ENCODE measurements at regions of chr2 and their contacts with region 1.

Region 1: DNA sequence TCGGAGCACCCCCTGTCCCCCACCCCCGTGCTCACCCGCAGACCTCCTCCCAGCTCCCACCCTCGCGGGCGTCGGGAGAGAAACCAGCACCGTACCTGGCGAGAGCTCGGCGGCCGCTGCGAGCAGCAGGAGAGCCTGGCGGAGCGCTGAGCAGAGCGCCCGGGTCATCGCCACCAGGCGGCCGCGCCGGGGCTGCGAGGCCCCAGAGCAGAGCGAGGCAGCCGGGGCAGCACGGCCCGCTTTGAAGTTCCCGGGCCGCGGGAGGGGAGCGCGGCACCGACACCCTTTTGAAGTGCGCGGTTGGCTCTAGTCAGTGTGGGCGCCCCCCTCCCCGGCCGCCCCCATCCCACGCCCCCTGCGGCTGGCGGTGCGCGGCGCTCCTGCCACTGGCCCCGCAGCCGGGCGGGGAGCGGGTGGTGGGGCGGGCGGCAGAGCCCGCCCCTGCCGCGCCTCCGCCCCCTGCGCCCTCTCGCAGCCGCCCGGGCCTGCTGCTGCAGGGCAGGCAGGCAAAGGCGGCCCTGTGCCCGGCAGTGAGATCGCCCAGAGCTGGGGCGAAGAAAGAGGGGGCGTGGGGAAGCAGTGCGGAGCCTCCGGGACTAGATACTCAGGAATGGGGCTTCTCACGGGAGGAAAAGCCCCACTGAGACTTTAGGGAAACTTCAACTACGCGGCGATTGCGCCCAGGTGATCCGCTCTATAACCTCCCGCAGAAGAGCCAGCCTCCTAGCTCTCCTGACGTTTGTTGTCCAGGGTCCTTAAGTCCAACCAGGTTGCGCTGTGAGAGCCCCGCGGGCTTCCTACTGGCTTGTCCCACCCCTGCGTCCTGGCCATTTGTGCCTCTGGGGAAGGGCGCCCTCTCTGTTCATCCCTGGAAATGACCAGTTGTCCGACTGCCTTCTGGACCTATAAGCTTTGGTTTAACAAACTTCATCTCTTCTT is at the start of gene ACVR1C:
- DNase-seq: peak; percentile 70
- ATAC-seq: peak; percentile 85
- H3K4me3 ChIP-seq: peak within 1 kb of the TSS; percentile 34 to 68 (median 57)
- H3K4me3 Mint-ChIP-seq: peak within 1 kb of the TSS; percentile 85
- H3K27ac ChIP-seq: no peak within 1 kb of the TSS
- H3K27ac Mint-ChIP-seq: peak within 1 kb of the TSS; percentile 63
- H3K4me1 ChIP-seq: peaks cover 12 to 17% of the 10 kb centered on the region in 2 donors
- H3K4me1 Mint-ChIP-seq: peaks cover 23% of the 10 kb centered on the region
- H3K27me3 ChIP-seq: peaks cover 0 to 13% (median 2%) of the 10 kb centered on the region in 4 experiments
- H3K27me3 Mint-ChIP-seq: peaks cover 19% of the 10 kb centered on the region
- CTCF ChIP-seq: peak; percentile 44
- total RNA-seq, gene ACVR1C: 0.39 and 0.52 TPM in 2 replicates

Region 2: GRCh38 chr2:157523270-157524247 is 105.2 kb before region 1 on chr2:
- CTCF ChIA-PET with region 1: no interaction called
- POLR2A ChIA-PET with region 1: no interaction called
- intact Hi-C with region 1: no loop called
- DNase-seq: peak; percentile 53
- ATAC-seq: peak; percentile 69
- H3K4me3 ChIP-seq: peak overlapping the region in 1 of 5 experiments; percentile 24
- H3K4me3 Mint-ChIP-seq: peak overlapping the region; percentile 4
- H3K27ac ChIP-seq: peak overlapping the region in 1 of 2 donors; percentile 32
- H3K27ac Mint-ChIP-seq: peak overlapping the region; percentile 1
- H3K4me1 ChIP-seq: peaks cover 13 to 16% of the 10 kb centered on the region in 2 donors
- H3K4me1 Mint-ChIP-seq: peaks cover 25% of the 10 kb centered on the region
- H3K27me3 ChIP-seq: no peaks in the 10 kb centered on the region
- H3K27me3 Mint-ChIP-seq: peaks cover 1% of the 10 kb centered on the region
- CTCF ChIP-seq: no peak

Region 3: GRCh38 chr2:158006961-158007719 is 378.4 kb after region 1 on chr2:
- CTCF ChIA-PET with region 1: interaction called, 5 read pairs
- POLR2A ChIA-PET with region 1: no interaction called
- intact Hi-C with region 1: loop called (anchors 1 kb)
- DNase-seq: peak; percentile 42
- ATAC-seq: peak; percentile 41
- H3K4me3 ChIP-seq: no peak overlapping the region
- H3K4me3 Mint-ChIP-seq: no peak overlapping the region
- H3K27ac ChIP-seq: no peak overlapping the region
- H3K27ac Mint-ChIP-seq: no peak overlapping the region
- H3K4me1 ChIP-seq: no peaks in the 10 kb centered on the region
- H3K4me1 Mint-ChIP-seq: peaks cover 5% of the 10 kb centered on the region
- H3K27me3 ChIP-seq: peaks cover 0 to 4% (median 2%) of the 10 kb centered on the region in 4 experiments
- H3K27me3 Mint-ChIP-seq: peaks cover 17% of the 10 kb centered on the region
- CTCF ChIP-seq: no peak

Measured in B cell (primary cell).